ENCODE measurements at regions of chr10 and their contacts with region 1.

Region 1: DNA sequence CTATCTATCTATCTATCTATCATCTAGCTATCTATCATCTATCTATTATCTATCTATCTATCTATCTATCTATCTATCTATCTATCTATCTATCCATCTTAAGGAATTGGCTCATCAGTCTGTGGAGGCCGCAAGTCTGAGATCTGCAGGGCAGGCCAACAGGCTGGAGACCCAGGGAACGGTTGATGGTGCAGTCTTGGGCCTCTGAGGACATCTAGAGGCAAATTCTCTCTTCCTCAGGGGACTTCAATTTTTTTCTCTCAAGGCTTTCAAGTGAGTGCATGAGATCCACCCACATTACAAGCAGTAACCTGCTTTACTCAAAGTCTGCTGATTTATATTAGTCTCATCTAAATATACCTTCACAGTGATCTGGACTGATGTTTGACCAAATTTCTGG is 197.0 kb downstream of the GLRX3 start:
- DNase-seq: no peak
- H3K4me3 Mint-ChIP-seq: no peak overlapping the region
- H3K27ac Mint-ChIP-seq: no peak overlapping the region
- H3K4me1 Mint-ChIP-seq: no peaks in the 10 kb centered on the region
- H3K27me3 Mint-ChIP-seq: no peaks in the 10 kb centered on the region

Region 2: DNA sequence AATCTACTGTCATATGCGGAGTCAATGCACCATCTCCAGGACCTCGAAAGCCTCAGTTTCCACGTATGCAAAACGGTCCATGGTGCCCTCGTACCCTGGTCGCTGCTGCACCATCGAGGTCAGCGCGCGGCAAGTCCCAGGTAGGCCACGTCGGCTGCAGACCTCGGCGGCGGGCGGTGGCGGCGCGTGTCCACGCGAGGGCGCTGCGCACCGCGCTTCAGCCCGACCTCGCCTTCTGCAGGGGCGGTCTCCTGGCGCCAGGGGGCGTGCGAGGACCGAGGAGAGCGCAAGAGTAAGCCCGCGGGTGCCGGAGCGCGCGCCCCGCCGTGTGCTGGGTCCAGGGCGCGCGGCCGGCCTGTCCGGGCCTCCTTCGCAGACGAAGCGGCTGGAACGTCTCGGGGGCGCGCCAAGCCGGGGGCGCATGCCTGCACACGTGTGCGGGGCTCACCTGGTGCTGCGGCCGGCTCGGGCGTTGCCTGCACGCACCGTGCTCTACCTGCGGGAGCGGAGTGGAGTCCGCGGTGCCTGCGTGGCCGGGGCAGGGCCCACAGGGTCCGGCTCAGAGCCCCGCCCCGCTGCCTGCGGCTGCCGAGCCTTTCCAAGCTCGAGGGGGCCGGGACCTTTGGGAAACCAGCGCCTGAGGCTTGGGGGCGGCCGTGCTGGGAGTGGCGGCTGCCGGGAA is 143.0 kb before region 1 on chr10:
- intact Hi-C with region 1: loop called (anchors 10 kb)
- DNase-seq: peak; percentile 81
- H3K4me3 Mint-ChIP-seq: no peak overlapping the region
- H3K27ac Mint-ChIP-seq: no peak overlapping the region
- H3K4me1 Mint-ChIP-seq: no peaks in the 10 kb centered on the region
- H3K27me3 Mint-ChIP-seq: no peaks in the 10 kb centered on the region